ENCODE measurements at regions of chr11 and their contacts with region 1.

Region 1: DNA sequence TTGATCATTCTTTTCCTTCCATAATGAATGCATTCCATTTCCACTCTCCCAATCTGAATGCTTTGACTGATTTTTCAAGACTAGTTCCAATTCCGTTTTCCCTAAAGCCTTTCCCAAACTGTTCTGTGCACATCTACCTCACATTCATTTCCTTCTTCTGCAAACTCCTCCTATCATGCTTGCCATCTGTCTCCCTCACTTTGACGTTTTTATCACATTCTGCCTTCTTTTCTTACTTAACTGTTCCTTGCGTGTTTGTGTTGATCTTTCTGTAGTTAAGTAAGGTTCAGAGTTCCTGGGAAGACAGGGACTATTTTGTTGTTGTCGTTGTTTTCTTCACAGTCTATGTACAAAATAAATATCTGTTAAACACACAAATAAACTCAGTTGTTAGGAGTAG is 179.0 kb downstream of the NXPE2 start:
- DNase-seq: no peak
- H3K4me3 ChIP-seq: no peak overlapping the region
- H3K4me3 Mint-ChIP-seq: no peak overlapping the region
- H3K27ac Mint-ChIP-seq: no peak overlapping the region
- H3K4me1 ChIP-seq: no peaks in the 10 kb centered on the region
- H3K4me1 Mint-ChIP-seq: no peaks in the 10 kb centered on the region
- H3K27me3 ChIP-seq: no peaks in the 10 kb centered on the region; the same call in none of the 2 replicates
- H3K27me3 Mint-ChIP-seq: peaks cover 18% of the 10 kb centered on the region
- CTCF ChIP-seq: no peak

Region 2: GRCh38 chr11:116162886-116163230 is 1305.6 kb after region 1 on chr11:
- CTCF ChIA-PET with region 1: interaction called, 20 read pairs
- POLR2A ChIA-PET with region 1: no interaction called
- intact Hi-C with region 1: no loop called
- DNase-seq: peak in 1 of 2 experiments; percentile 40
- H3K4me3 ChIP-seq: no peak overlapping the region
- H3K4me3 Mint-ChIP-seq: no peak overlapping the region
- H3K27ac Mint-ChIP-seq: no peak overlapping the region
- H3K4me1 ChIP-seq: peaks cover 6% of the 10 kb centered on the region
- H3K4me1 Mint-ChIP-seq: peaks cover 9% of the 10 kb centered on the region
- H3K27me3 ChIP-seq: no peaks in the 10 kb centered on the region
- H3K27me3 Mint-ChIP-seq: peaks cover 5% of the 10 kb centered on the region
- CTCF ChIP-seq: no peak